CD4-positive, alpha-beta memory T cell (primary cell): ENCODE measurements at regions of chr6 and their contacts with region 1.

Region 1: DNA sequence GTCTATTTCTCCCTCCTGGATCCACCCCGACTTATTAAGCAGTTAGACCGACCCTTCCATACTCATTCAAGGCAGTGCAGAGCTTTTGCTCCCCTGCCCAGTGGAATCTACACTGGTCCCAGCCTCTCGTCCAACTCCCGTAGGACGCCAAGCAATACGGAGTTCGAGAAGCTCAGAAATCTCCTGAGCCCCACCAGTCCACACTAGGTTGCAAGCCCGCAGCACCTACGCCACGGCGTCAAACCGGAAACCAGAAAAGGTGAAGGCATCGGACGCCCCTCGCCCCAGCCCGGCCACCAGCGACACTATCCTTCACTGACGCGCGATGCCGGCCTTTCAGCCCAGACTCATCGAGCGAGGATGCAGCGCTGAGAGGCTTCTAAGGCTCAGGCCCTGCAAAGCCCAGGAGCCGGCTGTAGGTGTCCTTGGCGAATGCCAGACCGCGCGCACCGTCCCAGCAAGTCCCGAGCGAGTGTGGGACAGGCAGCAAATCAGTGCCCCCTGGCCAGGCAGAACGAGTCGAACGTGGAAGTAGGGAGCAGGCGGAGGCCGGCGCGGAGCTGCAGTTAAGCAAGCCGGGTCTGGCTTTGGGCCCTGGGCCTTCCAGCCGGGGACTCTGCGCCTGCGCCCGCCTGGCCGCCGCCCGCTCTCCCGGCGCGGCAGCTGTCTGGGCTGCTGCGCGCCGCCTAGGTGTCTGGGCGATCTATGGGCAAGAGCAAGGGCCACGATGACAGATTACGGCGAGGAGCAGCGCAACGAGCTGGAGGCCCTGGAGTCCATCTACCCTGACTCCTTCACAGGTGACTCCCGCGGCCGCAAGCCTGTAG is at the start of gene RWDD1:
- DNase-seq: peak; percentile 98 to 99 (median 99)
- H3K4me3 ChIP-seq: peak within 1 kb of the TSS; percentile 68 to 86
- H3K4me3 Mint-ChIP-seq: peak within 1 kb of the TSS; percentile 98 to 99 (median 99)
- H3K27ac ChIP-seq: peak within 1 kb of the TSS; percentile 96
- H3K27ac Mint-ChIP-seq: peak within 1 kb of the TSS; percentile 98 to 100 (median 99)
- H3K4me1 ChIP-seq: peaks cover 44% of the 10 kb centered on the region
- H3K4me1 Mint-ChIP-seq: peaks cover 22 to 57% (median 39%) of the 10 kb centered on the region in 4 donors
- H3K27me3 ChIP-seq: no peaks in the 10 kb centered on the region
- H3K27me3 Mint-ChIP-seq: no peaks in the 10 kb centered on the region
- total RNA-seq, gene RWDD1: 32.6 to 34.4 TPM

Region 2: DNA sequence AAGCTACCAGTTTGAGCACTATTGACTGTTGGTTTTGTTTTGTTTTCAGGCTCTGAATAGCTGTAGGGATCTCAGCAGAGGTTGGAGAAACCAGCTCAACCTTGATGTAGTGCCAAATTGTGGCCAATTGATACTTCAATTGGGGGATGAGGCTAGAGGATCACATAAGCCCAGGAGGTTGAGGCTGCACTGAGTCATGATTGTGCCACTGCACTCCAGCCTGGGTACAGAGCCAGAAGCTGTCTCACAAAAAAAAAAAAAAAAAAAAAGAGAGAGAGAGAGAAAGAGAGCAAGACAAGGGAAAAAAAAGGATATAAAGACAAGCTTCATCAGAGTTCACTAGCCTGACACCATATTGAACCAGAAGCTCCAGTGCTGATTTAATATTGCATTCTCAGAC is 1212.5 kb before region 1 on chr6:
- CTCF ChIA-PET with region 1: no interaction called
- POLR2A ChIA-PET with region 1: no interaction called
- intact Hi-C with region 1: no loop called
- DNase-seq: no peak
- H3K4me3 ChIP-seq: no peak overlapping the region
- H3K4me3 Mint-ChIP-seq: no peak overlapping the region
- H3K27ac ChIP-seq: no peak overlapping the region
- H3K27ac Mint-ChIP-seq: no peak overlapping the region
- H3K4me1 ChIP-seq: no peaks in the 10 kb centered on the region
- H3K4me1 Mint-ChIP-seq: no peaks in the 10 kb centered on the region
- H3K27me3 ChIP-seq: no peaks in the 10 kb centered on the region
- H3K27me3 Mint-ChIP-seq: no peaks in the 10 kb centered on the region

Region 3: GRCh38 chr6:116100419-116101301 is 470.4 kb before region 1 on chr6 and contains the start of gene NT5DC1:
- CTCF ChIA-PET with region 1: interaction called, 3 read pairs
- POLR2A ChIA-PET with region 1: interaction called, 17 read pairs
- intact Hi-C with region 1: loop called (anchors 1 kb)
- DNase-seq: peak; percentile 81 to 86 (median 84)
- H3K4me3 ChIP-seq: peak within 1 kb of the TSS; percentile 66 to 71
- H3K4me3 Mint-ChIP-seq: peak within 1 kb of the TSS; percentile 94 to 99 (median 98)
- H3K27ac ChIP-seq: peak within 1 kb of the TSS; percentile 86
- H3K27ac Mint-ChIP-seq: peak within 1 kb of the TSS; percentile 89 to 97 (median 93)
- H3K4me1 ChIP-seq: peaks cover 49% of the 10 kb centered on the region
- H3K4me1 Mint-ChIP-seq: peaks cover 44 to 57% (median 48%) of the 10 kb centered on the region in 4 donors
- H3K27me3 ChIP-seq: no peaks in the 10 kb centered on the region
- H3K27me3 Mint-ChIP-seq: no peaks in the 10 kb centered on the region
- total RNA-seq, gene NT5DC1: 50.5 to 51.9 TPM

Region 4: DNA sequence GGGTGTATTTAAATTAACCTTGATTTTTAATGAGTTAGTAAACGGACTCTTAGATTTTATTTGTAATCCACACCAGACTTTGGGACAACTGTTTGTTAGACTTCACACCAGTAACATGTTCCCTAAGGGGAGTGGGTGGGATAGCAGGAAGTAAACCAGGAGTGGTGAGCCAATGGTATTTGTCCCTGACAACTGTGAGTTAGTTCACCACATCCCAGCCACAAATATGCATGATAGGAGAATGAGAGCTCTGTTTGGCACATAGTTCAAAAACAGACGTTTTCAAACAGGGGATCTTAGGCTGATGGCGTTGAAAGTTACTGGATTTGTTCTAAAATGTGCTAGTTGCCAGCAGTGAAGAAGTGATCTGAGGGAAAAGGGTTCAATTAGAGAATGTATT is 426.5 kb before region 1 on chr6:
- CTCF ChIA-PET with region 1: no interaction called
- POLR2A ChIA-PET with region 1: no interaction called
- intact Hi-C with region 1: no loop called
- DNase-seq: no peak
- H3K4me3 ChIP-seq: no peak overlapping the region
- H3K4me3 Mint-ChIP-seq: no peak overlapping the region
- H3K27ac ChIP-seq: no peak overlapping the region
- H3K27ac Mint-ChIP-seq: no peak overlapping the region
- H3K4me1 ChIP-seq: no peaks in the 10 kb centered on the region
- H3K4me1 Mint-ChIP-seq: peaks cover 0 to 2% (median under 1%) of the 10 kb centered on the region in 4 donors
- H3K27me3 ChIP-seq: no peaks in the 10 kb centered on the region
- H3K27me3 Mint-ChIP-seq: no peaks in the 10 kb centered on the region

Region 5: DNA sequence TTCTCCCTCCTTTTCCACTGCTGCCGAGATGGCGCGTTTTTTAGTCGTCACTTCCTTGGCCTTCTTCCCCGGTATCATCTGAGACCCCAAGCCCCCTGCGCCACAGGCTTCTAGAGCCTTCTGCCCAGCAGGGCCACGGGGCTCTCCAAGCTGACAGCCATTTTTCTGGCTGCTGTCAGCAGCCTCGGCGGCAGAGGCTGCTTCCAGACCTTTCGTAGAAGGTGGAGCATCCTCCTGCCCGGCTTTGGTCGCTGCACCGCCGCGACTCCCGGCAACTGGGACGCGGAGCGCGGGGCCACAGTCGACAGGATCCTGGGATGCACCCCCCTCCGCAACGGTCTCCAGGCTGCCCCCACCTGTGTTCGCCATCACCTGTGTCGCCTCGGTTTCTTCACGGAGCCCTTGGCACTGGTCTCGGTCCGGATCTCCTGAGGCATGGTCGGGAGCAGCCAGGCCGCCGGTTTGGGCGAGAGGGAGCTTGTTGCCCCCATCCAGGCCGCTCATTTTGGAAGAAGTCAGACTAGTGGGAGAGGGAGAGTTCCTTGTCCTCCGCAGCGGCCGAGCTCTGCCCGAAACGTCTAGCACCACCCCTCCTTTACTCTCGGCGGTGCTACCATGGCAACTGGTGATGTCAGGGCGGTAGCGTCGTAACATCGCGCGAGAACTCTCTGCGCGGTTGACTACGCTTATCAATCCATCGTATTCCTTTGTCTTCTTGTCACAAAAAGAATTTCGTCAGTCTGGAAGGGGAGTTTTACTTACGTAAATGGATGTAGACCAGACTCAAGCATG is 317.4 kb before region 1 on chr6 and contains the start of gene TSPYL4:
- CTCF ChIA-PET with region 1: interaction called, 3 read pairs
- POLR2A ChIA-PET with region 1: interaction called, 13 read pairs
- intact Hi-C with region 1: loop called (anchors 1 kb)
- DNase-seq: peak; percentile 91 to 96 (median 93)
- H3K4me3 ChIP-seq: peak within 1 kb of the TSS; percentile 66 to 96
- H3K4me3 Mint-ChIP-seq: no peak within 1 kb of the TSS
- H3K27ac ChIP-seq: peak within 1 kb of the TSS; percentile 97
- H3K27ac Mint-ChIP-seq: peak within 1 kb of the TSS in 1 of 7 donors; percentile 69
- H3K4me1 ChIP-seq: peaks cover 45% of the 10 kb centered on the region
- H3K4me1 Mint-ChIP-seq: peaks cover 3 to 32% (median 18%) of the 10 kb centered on the region in 4 donors
- H3K27me3 ChIP-seq: no peaks in the 10 kb centered on the region
- H3K27me3 Mint-ChIP-seq: no peaks in the 10 kb centered on the region
- total RNA-seq, gene TSPYL4: 22.3 to 23.0 TPM

Region 6: DNA sequence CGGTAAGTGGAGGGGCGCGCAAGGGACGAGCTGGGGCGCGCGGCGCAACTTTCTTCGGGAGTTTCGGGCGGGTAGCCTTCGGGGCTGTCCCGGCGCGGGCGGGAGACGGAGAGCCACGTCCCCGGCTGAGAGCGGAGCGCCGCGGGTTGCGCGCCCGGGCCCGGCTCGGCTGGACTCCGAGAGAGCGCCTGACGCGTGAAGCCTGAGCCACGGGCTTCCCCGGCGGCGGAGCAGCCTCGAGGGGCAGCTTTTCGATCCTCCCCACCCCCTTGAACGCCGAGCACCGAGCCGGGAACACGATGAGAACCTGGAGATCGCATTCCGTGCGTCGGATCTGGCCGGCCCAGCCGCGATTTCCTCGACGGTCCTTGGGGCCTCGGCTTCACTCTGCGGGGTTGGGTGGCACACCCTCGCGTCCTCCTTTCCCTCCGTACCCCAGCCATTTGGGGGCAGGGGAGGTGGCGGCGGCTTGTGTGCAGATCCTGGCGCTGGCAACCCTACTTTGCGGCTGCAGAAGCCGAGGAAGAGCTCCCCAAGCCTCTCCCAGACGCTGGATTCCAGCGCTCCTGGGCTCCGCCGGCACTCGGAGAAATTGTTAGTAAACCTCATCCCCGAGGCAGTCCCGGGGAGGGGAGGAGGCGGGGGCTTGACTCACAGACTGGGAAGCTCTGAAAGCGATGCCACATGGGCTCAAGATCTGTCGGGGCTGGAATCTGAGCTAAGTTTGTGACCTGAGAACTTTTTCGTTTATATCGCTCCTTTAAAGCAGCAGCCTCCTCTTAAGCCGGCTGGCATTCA is 199.8 kb before region 1 on chr6:
- CTCF ChIA-PET with region 1: no interaction called
- POLR2A ChIA-PET with region 1: no interaction called
- intact Hi-C with region 1: loop called (anchors 1 kb)
- DNase-seq: peak; percentile 24 to 43 (median 35)
- H3K4me3 ChIP-seq: peak overlapping the region; percentile 43 to 47
- H3K4me3 Mint-ChIP-seq: peak overlapping the region; percentile 81 to 95 (median 92)
- H3K27ac ChIP-seq: peak overlapping the region; percentile 44
- H3K27ac Mint-ChIP-seq: peak overlapping the region; percentile 54 to 91 (median 77)
- H3K4me1 ChIP-seq: peaks cover 18% of the 10 kb centered on the region
- H3K4me1 Mint-ChIP-seq: peaks cover 16 to 31% (median 18%) of the 10 kb centered on the region in 4 donors
- H3K27me3 ChIP-seq: no peaks in the 10 kb centered on the region
- H3K27me3 Mint-ChIP-seq: peaks cover 4 to 8% of the 10 kb centered on the region in 2 donors

Region 7: GRCh38 chr6:116522879-116523278 is 48.2 kb before region 1 on chr6:
- CTCF ChIA-PET with region 1: no interaction called
- POLR2A ChIA-PET with region 1: no interaction called
- intact Hi-C with region 1: no loop called
- DNase-seq: no peak
- H3K4me3 ChIP-seq: no peak overlapping the region
- H3K4me3 Mint-ChIP-seq: no peak overlapping the region
- H3K27ac ChIP-seq: no peak overlapping the region
- H3K27ac Mint-ChIP-seq: no peak overlapping the region
- H3K4me1 ChIP-seq: no peaks in the 10 kb centered on the region
- H3K4me1 Mint-ChIP-seq: no peaks in the 10 kb centered on the region
- H3K27me3 ChIP-seq: no peaks in the 10 kb centered on the region
- H3K27me3 Mint-ChIP-seq: peaks cover 0 to 3% of the 10 kb centered on the region in 2 donors

Region 8: DNA sequence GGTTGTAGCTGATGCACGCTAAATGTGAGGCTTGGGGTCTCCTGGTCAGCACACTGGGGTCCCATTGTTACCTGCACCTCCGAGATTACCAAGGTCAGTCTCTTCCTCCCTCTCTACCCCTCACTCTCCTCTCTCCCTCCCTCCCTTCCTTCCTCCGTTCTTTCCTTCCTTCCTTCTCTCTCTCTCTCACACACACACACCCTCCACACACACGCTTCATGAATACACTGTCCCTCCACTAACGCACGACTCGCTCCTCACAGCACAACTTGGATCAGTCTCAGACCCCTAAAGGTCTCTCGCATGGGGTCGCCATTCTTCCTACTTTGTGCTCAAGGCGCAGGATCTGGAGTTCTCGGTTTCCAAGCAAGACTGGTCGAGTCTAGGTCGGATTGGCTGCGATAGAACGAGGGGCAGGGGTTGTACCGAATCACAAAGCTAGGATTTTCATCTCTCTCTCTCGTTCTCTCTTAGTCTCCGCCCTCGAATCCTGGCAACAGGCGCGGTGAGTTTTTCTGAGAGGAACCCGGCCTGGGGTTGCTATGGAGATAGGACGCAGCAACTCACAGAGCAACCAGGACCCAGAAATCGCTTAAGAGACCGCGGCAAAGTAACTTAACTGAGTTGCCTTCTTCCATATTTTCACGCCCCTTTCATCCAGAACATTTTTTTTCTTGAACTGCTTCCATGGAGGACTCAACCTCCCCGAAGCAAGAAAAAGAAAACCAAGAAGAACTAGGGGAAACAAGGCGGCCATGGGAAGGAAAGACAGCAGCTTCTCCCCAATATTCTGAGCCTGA is 45.1 kb after region 1 on chr6 and contains the start of gene RSPH4A:
- CTCF ChIA-PET with region 1: no interaction called
- POLR2A ChIA-PET with region 1: interaction called, 3 read pairs
- intact Hi-C with region 1: loop called (anchors 2 kb)
- DNase-seq: peak; percentile 66 to 86 (median 74)
- H3K4me3 ChIP-seq: peak within 1 kb of the TSS; percentile 37 to 49
- H3K4me3 Mint-ChIP-seq: peak within 1 kb of the TSS; percentile 79 to 91 (median 90)
- H3K27ac ChIP-seq: no peak within 1 kb of the TSS
- H3K27ac Mint-ChIP-seq: peak within 1 kb of the TSS; percentile 10 to 93 (median 82)
- H3K4me1 ChIP-seq: peaks cover 15% of the 10 kb centered on the region
- H3K4me1 Mint-ChIP-seq: peaks cover 11 to 20% (median 11%) of the 10 kb centered on the region in 4 donors
- H3K27me3 ChIP-seq: no peaks in the 10 kb centered on the region
- H3K27me3 Mint-ChIP-seq: peaks cover 2 to 6% of the 10 kb centered on the region in 2 donors
- total RNA-seq, gene RSPH4A: 0.39 to 0.44 TPM

Region 9: GRCh38 chr6:116667623-116668022 is 96.6 kb after region 1 on chr6:
- CTCF ChIA-PET with region 1: interaction called, 4 read pairs
- POLR2A ChIA-PET with region 1: interaction called, 12 read pairs
- intact Hi-C with region 1: loop called (anchors 1 kb)
- DNase-seq: no peak
- H3K4me3 ChIP-seq: peak overlapping the region; percentile 91 to 98
- H3K4me3 Mint-ChIP-seq: peak overlapping the region; percentile 96 to 100 (median 99)
- H3K27ac ChIP-seq: peak overlapping the region; percentile 91
- H3K27ac Mint-ChIP-seq: peak overlapping the region; percentile 97 to 100 (median 99)
- H3K4me1 ChIP-seq: peaks cover 50% of the 10 kb centered on the region
- H3K4me1 Mint-ChIP-seq: peaks cover 31 to 54% (median 41%) of the 10 kb centered on the region in 4 donors
- H3K27me3 ChIP-seq: no peaks in the 10 kb centered on the region
- H3K27me3 Mint-ChIP-seq: peaks cover 2% of the 10 kb centered on the region in 2 donors

Region 10: DNA sequence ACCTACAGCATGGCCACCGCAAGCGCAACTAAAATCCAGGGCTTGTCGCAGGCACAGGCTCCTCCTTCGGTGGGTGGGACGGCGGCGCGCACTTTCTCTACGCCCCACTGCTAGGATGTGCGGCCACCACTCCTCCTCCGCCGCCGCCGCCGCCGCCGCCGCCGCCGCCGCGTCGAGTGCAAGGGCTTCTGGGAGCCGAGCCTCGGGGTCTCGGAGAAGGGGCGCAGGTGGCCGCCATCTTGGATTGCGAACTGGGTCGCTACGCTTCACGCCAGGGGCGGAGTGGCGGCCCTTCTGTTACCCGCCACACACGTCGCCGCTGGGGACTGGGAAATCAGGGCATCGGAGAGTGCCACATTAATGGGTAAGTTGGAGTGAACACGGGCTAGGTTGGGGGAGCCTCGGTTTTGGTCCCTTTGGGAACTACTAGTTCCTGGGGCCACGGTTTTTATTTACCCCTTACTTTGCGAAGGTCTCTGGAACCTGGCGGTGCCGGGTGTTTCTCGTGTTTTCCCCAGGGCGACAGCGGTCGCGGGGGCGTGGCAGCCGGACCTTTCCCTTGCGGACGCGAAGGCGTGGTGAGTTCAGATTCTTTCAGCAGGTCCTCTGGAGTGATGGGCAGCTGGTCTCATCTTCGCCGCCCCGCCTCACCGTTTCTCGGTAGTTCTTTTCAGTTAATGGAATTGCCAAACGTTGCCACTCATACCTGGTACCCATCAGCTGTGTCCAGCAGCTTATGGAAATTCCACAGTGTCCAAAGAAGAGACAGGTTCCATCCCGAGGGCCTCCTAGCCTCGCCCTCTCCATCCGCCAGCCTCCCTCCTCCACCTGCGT is 110.1 kb after region 1 on chr6 and contains the start of gene KPNA5:
- CTCF ChIA-PET with region 1: interaction called, 3 read pairs
- POLR2A ChIA-PET with region 1: interaction called, 37 read pairs
- intact Hi-C with region 1: loop called (anchors 1 kb)
- DNase-seq: peak; percentile 83 to 93 (median 88)
- H3K4me3 ChIP-seq: peak within 1 kb of the TSS; percentile 75 to 95
- H3K4me3 Mint-ChIP-seq: peak within 1 kb of the TSS; percentile 96 to 99 (median 98)
- H3K27ac ChIP-seq: peak within 1 kb of the TSS; percentile 84
- H3K27ac Mint-ChIP-seq: peak within 1 kb of the TSS; percentile 95 to 99 (median 99)
- H3K4me1 ChIP-seq: peaks cover 34% of the 10 kb centered on the region
- H3K4me1 Mint-ChIP-seq: peaks cover 33 to 61% (median 46%) of the 10 kb centered on the region in 4 donors
- H3K27me3 ChIP-seq: no peaks in the 10 kb centered on the region
- H3K27me3 Mint-ChIP-seq: no peaks in the 10 kb centered on the region
- total RNA-seq, gene KPNA5: 60.7 to 61.8 TPM

Region 11: DNA sequence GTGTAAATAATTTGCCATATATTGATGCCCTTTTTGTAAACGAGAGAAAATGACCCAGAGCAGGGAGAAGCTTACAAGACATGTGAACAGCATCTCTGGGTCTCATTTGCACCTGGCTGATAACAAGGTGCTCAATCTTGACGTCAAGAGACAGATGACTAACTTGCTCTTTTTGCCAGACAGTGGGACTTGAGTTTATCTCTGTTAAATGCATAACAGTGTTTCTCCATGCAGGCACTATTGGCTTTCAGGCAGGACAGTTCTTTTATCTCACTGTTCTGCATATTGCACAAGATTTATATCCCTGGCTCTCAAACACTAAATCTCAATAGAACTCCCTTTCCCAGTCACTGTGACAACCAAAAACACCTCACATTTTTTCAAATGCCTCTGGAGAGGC is 362.4 kb after region 1 on chr6:
- CTCF ChIA-PET with region 1: no interaction called
- POLR2A ChIA-PET with region 1: no interaction called
- intact Hi-C with region 1: no loop called
- DNase-seq: no peak
- H3K4me3 ChIP-seq: no peak overlapping the region
- H3K4me3 Mint-ChIP-seq: no peak overlapping the region
- H3K27ac ChIP-seq: no peak overlapping the region
- H3K27ac Mint-ChIP-seq: no peak overlapping the region
- H3K4me1 ChIP-seq: no peaks in the 10 kb centered on the region
- H3K4me1 Mint-ChIP-seq: no peaks in the 10 kb centered on the region
- H3K27me3 ChIP-seq: no peaks in the 10 kb centered on the region
- H3K27me3 Mint-ChIP-seq: no peaks in the 10 kb centered on the region